Calu3 (cell line): ENCODE measurements at regions of chr12 and their contacts with region 1.

Region 1: GRCh38 chr12:104358347-104359003 is 54.9 kb downstream of the EID3 start:
- DNase-seq: peak; percentile 75
- H3K4me3 Mint-ChIP-seq: no peak overlapping the region
- H3K27ac Mint-ChIP-seq: peak overlapping the region; percentile 58
- H3K4me1 Mint-ChIP-seq: peaks cover 16% of the 10 kb centered on the region
- H3K27me3 Mint-ChIP-seq: no peaks in the 10 kb centered on the region
- CTCF ChIP-seq: peak; percentile 84

Region 2: DNA sequence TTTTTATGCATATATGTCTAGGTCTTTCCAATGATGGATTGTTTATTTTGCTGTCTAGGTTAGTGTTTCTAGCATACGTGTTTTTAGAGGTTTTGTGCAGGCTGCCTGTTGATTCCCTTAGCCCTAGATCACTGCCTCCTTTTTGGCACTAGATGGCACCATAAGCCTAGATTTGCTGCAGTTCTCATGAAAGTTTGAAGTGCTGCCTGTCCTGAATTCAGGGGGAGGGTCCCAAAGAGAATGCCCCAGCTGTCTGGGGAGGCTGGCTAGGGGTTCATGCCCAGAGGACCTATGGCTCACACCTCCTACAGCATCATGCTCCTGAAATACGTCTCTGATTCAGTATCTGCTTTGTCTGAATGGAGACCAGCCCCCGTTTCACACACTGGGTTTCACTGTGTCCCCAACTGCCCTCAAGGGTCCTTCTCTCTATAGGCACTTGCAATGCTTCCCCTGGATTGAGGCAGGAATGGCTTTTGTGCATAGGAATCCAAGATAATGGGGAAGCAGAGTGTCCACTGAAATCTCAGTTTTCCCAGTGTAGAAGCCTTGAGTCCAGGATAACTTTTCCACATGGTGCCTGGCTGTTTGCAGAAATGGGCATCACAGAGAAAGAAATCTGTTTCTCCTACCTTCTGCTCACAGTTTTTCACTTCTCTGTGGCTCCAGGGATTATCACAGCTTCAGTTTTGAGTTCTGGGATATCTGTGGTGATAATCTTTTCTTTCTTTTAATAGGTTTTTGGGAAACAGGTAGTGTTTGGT is 157.1 kb before region 1 on chr12:
- CTCF ChIA-PET with region 1: interaction called, 3 read pairs
- intact Hi-C with region 1: loop called (anchors 1 kb)
- DNase-seq: peak; percentile 48
- H3K4me3 Mint-ChIP-seq: no peak overlapping the region
- H3K27ac Mint-ChIP-seq: no peak overlapping the region
- H3K4me1 Mint-ChIP-seq: no peaks in the 10 kb centered on the region
- H3K27me3 Mint-ChIP-seq: no peaks in the 10 kb centered on the region
- CTCF ChIP-seq: peak; percentile 84